Right ventricle myocardium inferior (tissue), 1 donor: ENCODE measurements at regions of chr1 and their contacts with region 1.

Region 1: GRCh38 chr1:246497331-246497915 is 9.7 kb downstream of the SMYD3 start:
- DNase-seq: no peak
- ATAC-seq: no peak

Region 2: DNA sequence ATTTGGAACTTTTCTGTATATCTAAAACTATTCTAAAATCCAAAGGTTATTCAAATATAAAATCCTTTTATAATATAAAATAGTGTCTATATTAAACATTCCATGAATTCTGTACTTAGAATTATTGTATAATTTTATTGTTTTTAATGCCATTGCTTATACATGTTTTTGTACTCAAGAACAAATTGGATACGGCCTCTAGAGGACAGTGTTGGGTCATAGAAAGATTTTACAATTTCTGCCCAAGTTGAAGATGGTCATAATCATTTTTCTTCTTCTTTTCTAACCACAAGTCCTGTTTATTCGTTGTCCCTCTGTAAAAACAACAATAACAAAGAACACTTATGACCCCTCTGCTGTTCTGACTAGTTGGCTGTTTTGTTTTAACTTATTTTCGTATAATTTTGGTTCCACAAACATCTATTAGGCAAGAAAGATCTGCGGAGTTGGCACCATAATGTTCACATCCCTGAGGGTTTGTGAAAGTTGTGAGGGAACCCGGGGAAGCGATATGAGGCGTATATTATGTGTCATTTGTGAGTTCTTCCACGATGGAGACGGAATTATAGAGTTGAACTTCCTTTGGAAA is 1418.3 kb before region 1 on chr1:
- intact Hi-C with region 1: loop called (anchors 2 kb)
- DNase-seq: no peak
- ATAC-seq: no peak

Region 3: DNA sequence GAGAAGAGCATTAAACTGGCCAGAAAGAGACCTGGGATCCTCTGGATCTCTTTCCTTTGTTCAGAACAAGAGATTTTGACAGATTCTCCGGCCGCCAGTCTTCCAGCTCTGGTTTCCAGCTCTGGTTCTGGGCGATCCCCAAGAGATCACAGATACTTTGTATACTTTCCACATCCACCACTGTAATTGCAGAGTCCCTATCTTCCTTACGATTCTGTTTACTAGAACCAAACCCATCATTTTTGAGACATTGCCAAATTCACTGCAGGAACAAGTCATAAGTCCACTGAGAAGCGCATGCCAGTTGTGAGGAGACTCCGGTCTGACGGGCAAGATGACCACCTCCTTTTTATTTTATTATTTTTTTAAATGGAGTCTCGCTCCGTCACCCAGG is 495.6 kb before region 1 on chr1:
- intact Hi-C with region 1: no loop called
- DNase-seq: no peak
- ATAC-seq: no peak

Region 4: DNA sequence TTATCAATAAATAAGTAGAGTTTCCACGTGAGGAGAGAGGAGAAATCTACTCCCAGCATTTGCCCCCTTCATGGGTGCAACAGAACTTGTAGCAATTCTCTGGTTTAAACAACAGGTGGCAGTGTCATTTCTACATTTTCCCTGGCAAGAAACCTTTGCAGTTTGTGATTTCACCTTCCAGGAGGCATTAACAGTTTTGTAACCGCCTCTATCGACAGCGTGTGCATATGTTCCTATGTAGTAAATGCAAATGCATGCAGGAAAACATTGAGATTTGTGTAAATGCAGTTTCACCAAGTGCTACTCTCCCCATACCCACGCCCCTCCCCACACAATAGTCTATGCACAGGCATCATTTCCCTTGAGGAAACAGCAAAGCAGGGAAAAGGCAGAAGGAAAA is 485.1 kb before region 1 on chr1:
- intact Hi-C with region 1: loop called (anchors 2 kb)
- DNase-seq: no peak
- ATAC-seq: no peak

Region 5: DNA sequence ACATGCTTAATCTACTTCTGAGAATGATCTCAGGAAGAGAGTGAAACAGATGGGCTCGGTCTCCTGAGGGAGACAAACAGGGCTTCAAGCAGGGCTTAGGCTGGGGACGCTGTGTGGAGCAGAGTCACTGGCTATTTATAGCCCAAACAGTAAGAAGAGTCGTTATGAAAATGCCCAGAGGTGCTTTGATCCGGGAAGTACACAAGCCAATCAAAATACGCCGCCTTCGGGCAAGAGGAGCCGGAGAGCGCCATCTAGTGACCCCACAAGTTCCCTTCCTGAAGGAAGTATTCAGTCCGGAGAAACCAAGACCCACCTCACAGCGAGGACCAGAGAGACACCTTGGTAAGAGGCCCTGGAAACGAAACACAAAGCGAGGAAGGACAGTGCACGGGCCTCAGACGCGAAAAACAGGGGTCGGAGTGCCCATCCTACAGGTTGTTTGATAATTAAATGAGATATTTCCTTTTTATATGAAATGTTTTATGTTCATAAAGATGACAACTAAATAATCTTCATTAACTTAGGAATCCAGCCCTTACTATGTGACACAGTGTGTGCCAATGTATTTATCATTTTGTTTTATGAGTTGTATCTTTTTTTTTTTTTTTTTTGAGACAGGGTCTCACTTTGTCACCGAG is 201.8 kb after region 1 on chr1:
- intact Hi-C with region 1: loop called (anchors 1 kb)
- DNase-seq: peak; percentile 88
- ATAC-seq: peak; percentile 94

Region 6: DNA sequence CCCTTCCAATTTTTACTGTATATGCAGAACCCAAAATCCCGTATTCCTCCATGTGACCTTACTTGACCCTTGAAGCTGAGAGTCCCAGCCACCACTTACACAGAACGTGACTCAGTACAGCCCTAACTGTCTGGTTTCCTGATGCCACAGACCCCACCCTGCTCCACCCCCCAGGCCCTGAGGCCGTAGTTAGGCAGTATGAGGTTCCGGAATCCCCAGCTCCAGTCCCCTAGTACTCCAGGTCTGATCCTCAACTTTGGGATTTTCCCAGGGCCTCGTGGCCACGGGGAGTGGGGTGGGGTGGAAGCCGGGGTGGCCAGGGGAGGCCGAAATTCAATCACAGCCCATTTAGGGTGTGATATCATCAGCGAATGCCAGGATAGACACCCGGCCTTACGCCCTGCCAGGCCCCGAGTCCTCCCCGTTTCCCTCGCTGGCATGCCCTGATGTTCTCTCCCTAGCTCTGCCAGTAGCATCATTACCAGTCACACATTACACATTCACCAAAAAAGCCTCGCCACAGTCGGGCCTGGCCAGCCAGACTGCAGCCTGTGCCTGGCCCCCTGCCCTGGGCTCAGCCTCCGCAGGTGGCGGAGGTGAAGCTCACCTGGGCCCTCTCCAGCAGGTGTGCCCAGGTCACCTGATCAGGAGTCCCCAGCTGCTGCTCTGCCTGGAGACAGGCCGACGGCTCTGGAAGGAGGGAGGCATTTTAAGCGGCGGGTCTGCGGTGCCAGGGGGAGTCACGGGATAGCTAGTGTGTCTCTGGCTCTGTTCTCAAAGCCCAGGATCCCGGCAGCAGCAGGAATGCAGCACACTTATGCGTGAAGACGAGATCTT is 297.6 kb after region 1 on chr1:
- intact Hi-C with region 1: no loop called
- DNase-seq: no peak
- ATAC-seq: peak; percentile 8